ENCODE measurements at regions of chr2 and their contacts with region 1.

Region 1: GRCh38 chr2:187934692-187935091 is 357.0 kb upstream of the GULP1 start:
- DNase-seq: no peak
- ATAC-seq: no peak
- H3K4me3 ChIP-seq: no peak overlapping the region
- H3K27ac ChIP-seq: no peak overlapping the region
- H3K4me1 ChIP-seq: no peaks in the 10 kb centered on the region
- H3K27me3 ChIP-seq: no peaks in the 10 kb centered on the region
- CTCF ChIP-seq: no peak

Region 2: DNA sequence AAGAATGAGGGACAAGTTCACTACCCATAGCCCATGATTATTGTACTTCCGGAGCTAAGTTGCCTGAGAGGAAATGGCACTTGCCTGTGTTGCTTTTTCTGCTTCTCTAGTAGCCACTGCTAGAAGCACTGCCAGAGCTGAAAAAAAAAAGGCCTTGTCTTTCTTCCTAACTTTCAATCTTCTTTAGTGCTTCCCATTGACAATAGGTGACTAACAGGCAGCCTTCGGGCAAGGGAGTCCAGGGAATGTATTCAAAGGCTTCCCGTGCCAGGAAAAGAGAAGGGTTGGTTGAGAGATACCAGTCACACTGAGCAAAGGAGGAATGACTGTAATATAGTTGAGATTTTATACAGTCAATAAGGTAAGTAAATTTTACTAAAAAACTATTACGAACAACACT is 728.6 kb before region 1 on chr2:
- CTCF ChIA-PET with region 1: no interaction called
- POLR2A ChIA-PET with region 1: no interaction called
- in situ Hi-C with region 1: no loop called
- intact Hi-C with region 1: no loop called
- DNase-seq: no peak
- ATAC-seq: no peak
- H3K4me3 ChIP-seq: no peak overlapping the region
- H3K27ac ChIP-seq: no peak overlapping the region
- H3K4me1 ChIP-seq: no peaks in the 10 kb centered on the region
- H3K27me3 ChIP-seq: no peaks in the 10 kb centered on the region
- CTCF ChIP-seq: no peak

Region 3: DNA sequence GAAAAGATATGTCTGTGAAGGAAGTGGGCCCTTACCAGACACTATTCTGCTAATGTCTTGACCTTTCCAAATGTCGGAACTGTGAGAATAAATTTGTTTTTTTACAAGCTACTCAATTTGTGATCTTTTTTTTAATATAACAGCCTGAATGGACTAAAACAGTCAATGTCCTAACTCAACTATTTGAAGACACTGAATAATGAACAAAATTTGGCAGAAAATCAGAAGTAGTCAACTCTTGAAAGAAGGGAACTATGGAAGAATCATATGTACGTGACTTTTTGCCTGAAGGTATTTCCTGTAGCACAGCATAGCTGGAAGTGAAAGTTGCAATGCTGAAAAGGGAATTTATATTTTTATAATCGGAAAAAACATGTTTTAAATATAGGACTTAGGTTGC is 28.7 kb before region 1 on chr2:
- CTCF ChIA-PET with region 1: no interaction called
- POLR2A ChIA-PET with region 1: interaction called, 13 read pairs
- in situ Hi-C with region 1: no loop called
- intact Hi-C with region 1: no loop called
- DNase-seq: no peak
- ATAC-seq: no peak
- H3K4me3 ChIP-seq: no peak overlapping the region
- H3K27ac ChIP-seq: no peak overlapping the region
- H3K4me1 ChIP-seq: no peaks in the 10 kb centered on the region
- H3K27me3 ChIP-seq: no peaks in the 10 kb centered on the region
- CTCF ChIP-seq: no peak